H1 (cell line): ENCODE measurements at regions of chr2 and their contacts with region 1.

Region 1: DNA sequence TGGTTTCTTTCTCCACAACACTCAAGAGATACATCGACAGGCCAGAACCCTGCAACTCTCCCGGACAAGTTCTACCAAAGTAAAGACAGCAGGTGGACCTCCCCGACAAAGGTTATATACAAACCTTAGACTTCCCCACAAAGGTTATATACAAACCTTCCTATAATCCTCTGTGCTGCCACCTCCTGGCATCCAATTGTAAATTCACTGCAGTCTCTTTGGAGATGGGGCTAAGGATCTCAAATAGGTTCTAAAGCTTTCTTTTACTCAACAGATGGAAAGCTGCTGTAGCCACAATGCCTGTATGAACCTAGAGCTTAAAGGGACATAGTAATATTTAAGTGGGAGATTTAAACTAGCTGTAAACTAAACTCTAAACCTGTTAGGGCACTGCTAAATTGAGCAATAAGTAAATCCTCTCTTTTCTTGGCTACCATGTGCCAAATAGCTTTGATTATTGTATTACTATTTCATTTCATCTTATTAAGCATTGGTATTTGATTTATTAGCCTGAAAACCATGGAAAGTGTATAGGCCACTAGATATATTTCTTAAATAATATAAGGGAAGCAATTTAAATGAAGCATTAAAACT is 9.8 kb upstream of the MREG start:
- DNase-seq: peak; percentile 31 to 70
- H3K4me3 ChIP-seq: no peak overlapping the region
- H3K27ac ChIP-seq: no peak overlapping the region
- H3K4me1 ChIP-seq: no peaks in the 10 kb centered on the region
- H3K27me3 ChIP-seq: no peaks in the 10 kb centered on the region
- CTCF ChIP-seq: peak in 2 of 3 experiments; percentile 67 to 74; a peak in 3 of 4 replicates
- EP300 ChIP-seq: no peak
- POLR2A ChIP-seq: no peak
- RAD21 ChIP-seq: peak; percentile 55 to 58

Region 2: DNA sequence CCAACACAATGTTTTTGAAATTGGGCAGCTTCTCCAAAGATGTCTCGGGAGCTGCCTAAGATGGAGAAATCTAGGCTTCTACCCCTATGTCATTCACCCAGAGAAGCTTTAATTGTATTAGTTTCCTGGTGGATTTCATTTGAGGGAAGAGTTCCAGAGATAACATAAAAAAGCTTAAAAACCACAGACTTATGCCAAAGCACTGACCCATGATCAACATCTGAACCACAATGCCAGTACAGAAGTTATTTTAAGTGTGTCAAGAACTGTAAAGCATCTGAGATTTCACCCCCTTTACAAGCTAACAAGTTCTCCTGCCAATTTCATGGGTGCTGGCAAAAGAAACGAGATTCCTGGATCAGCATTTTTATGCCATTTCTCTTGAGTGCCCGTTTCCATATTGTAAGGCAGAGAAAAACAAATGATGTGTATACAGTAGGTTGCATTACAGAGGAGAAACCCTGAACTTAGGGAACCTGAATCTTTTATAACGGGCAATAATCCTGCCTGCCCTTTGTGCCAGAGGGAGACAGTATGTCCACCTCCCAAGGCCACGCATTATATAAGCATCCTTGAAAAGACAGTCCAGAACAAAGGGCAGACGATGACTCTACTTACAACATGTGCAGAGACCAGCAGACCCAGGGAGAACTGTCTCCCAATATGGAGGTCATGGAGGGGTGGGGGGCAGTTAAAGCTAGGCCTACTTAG is 53.9 kb before region 1 on chr2:
- CTCF ChIA-PET with region 1: interaction called, 23 read pairs
- POLR2A ChIA-PET with region 1: no interaction called
- DNase-seq: no peak
- H3K4me3 ChIP-seq: no peak overlapping the region
- H3K27ac ChIP-seq: no peak overlapping the region
- H3K4me1 ChIP-seq: peaks cover 0 to 12% (median 3%) of the 10 kb centered on the region in 4 experiments; a peak in 2 of 7 replicates
- H3K27me3 ChIP-seq: no peaks in the 10 kb centered on the region
- CTCF ChIP-seq: no peak
- EP300 ChIP-seq: no peak
- POLR2A ChIP-seq: no peak
- RAD21 ChIP-seq: no peak

Region 3: DNA sequence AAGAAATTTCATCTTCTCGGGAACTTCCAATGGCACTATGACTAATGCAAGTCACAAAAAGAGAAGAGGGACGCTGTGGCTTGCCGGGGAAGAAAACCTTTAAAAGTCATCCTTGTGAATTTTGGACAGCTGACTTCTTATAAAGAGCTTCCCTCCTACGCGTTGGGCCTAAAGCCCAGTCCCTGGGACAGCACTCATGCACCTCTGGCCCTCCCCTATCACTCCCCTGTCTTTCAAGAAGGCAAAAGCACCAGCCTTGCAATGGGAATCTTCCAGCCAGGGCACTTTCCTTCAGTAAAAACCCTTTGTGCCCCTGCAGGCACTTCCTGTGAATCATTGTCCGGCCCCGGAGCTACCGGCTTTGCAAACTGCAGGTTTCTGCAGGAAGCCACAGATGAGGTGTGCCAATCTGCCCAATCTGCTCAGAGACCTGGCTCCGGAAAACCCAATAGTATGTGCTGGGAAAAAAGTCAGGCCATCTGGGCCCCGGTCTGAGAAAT is 16.9 kb before region 1 on chr2:
- CTCF ChIA-PET with region 1: interaction called, 20 read pairs
- POLR2A ChIA-PET with region 1: interaction called, 9 read pairs
- DNase-seq: peak; percentile 39 to 73
- H3K4me3 ChIP-seq: no peak overlapping the region
- H3K27ac ChIP-seq: no peak overlapping the region; the same call in 1 of the 2 replicates
- H3K4me1 ChIP-seq: peaks cover 7 to 28% (median 13%) of the 10 kb centered on the region in 4 experiments
- H3K27me3 ChIP-seq: no peaks in the 10 kb centered on the region
- CTCF ChIP-seq: no peak
- EP300 ChIP-seq: no peak
- POLR2A ChIP-seq: 0 out of 3 replicates have a peak, but pooled peaks of 1 of the 2 experiments have one; percentile 19
- RAD21 ChIP-seq: 0 out of 4 replicates have a peak, but pooled peaks of 1 of the 2 experiments have one; percentile 4